Gastrocnemius medialis (tissue), 4 donors: ENCODE measurements at regions of chr6 and their contacts with region 1.

Region 1: GRCh38 chr6:155174576-155175211 is 89.1 kb upstream of the CLDN20 start:
- DNase-seq: peak; percentile 29 to 57
- ATAC-seq: peak; percentile 81 to 94
- H3K4me3 ChIP-seq: no peak overlapping the region
- H3K27ac ChIP-seq: peak overlapping the region; percentile 44 to 70 (median 55)
- H3K4me1 ChIP-seq: peaks cover 0 to 11% of the 10 kb centered on the region in 2 donors
- H3K27me3 ChIP-seq: no peaks in the 10 kb centered on the region
- CTCF ChIP-seq: peak; percentile 48 to 69 (median 58)
- POLR2A ChIP-seq: no peak

Region 2: GRCh38 chr6:154675602-154676088 is 499.0 kb before region 1 on chr6:
- in situ Hi-C with region 1: loop called (anchors 5 to 10 kb)
- intact Hi-C with region 1: loop called (anchors 5 kb)
- DNase-seq: peak; percentile 67 to 88
- ATAC-seq: peak; percentile 100
- H3K4me3 ChIP-seq: no peak overlapping the region
- H3K27ac ChIP-seq: no peak overlapping the region
- H3K4me1 ChIP-seq: no peaks in the 10 kb centered on the region
- H3K27me3 ChIP-seq: no peaks in the 10 kb centered on the region
- CTCF ChIP-seq: peak; percentile 91 to 99 (median 95)
- POLR2A ChIP-seq: no peak

Region 3: DNA sequence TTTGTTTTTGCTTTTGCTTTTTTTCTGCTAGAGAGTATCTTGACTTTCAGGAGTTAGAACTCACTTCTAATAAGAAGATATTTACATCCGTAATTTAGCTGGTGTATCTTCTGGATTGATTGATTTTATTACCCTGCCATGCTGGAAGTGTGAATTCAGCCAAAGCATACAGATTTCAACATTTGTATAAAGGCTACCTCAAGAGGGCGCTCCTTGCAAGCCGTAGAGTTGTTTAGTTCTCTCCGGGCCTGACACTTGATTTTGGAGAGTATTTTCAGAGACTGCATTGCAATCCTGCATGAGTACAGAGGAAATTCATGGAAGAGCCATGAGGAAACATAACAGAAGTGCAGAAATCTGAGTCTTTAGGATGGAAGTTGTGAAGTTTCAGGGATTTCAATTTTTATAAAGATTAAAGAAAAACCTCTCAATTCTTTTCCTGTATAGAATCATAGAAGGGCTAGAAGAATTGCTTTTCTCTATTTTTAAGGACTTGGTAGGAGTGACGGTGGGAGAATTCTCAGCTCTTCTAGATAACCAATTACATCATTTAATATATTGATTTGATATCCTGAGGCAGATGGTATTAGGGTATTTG is 246.3 kb before region 1 on chr6:
- in situ Hi-C with region 1: loop called (anchors 10 kb)
- intact Hi-C with region 1: loop called (anchors 1 kb)
- DNase-seq: no peak
- ATAC-seq: peak in 1 of 2 donors; percentile 68
- H3K4me3 ChIP-seq: no peak overlapping the region
- H3K27ac ChIP-seq: no peak overlapping the region
- H3K4me1 ChIP-seq: peaks cover 0 to 8% of the 10 kb centered on the region in 2 donors
- H3K27me3 ChIP-seq: no peaks in the 10 kb centered on the region
- CTCF ChIP-seq: peak; percentile 41 to 77 (median 55)
- POLR2A ChIP-seq: no peak

Region 4: DNA sequence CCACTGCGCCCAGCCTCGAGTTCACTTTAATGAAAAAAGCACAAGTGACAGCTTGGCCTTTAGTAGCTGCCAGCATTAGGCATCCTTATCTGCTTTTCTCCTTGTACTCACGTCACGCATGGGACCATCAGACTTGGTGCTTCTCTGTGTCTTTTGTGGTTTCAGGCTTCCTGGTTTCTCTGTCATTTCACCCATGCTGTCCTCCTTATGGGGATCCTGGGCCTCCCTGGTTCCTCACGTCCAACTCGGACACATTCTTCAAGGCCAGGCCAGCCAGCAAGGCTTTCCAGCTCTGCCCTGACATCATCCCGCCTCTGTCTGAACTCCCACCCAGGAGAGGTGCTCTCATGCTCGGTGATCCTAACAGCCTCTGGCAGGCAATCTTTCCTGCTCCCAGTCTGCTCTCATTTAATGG is 96.4 kb before region 1 on chr6:
- in situ Hi-C with region 1: no loop called
- intact Hi-C with region 1: no loop called
- DNase-seq: no peak
- ATAC-seq: no peak
- H3K4me3 ChIP-seq: no peak overlapping the region
- H3K27ac ChIP-seq: no peak overlapping the region
- H3K4me1 ChIP-seq: no peaks in the 10 kb centered on the region
- H3K27me3 ChIP-seq: no peaks in the 10 kb centered on the region
- CTCF ChIP-seq: no peak
- POLR2A ChIP-seq: no peak

Region 5: DNA sequence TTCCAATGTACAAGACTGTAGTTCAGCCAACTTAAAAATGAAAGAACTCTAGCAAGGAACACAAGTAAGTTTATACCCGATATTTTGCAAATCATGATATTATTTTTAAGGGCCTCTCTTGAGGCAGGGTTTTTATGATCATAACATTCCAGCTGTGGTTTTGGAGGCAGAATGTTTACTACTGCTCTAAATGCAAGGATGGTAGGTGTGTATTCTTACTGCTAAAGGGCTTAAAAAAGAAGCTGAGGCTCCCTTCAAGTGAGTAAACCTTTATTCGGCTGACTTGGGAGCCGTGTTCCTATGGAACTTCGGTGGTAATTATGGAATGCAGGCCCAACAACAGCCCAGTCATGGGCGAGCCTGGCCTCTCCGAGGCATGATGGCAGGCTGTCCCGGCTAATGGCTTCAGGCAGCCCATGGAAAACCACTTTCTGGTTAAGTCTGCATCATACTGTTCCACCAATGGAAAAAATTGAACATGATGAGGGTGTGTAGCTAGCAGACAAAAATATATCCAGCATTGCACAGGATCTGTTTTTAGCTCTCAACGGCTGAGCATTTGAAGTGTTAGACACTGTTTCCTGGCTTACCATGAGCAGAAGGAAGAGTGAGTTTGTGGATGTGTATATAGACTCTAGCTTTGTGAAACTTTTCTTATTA is 68.1 kb before region 1 on chr6:
- in situ Hi-C with region 1: no loop called
- intact Hi-C with region 1: loop called (anchors 5 kb)
- DNase-seq: no peak
- ATAC-seq: peak; percentile 60 to 76
- H3K4me3 ChIP-seq: peak overlapping the region in 3 of 4 donors; percentile 38 to 44 (median 44)
- H3K27ac ChIP-seq: peak overlapping the region; percentile 11 to 72 (median 63)
- H3K4me1 ChIP-seq: peaks cover 4 to 8% of the 10 kb centered on the region in 2 donors
- H3K27me3 ChIP-seq: no peaks in the 10 kb centered on the region
- CTCF ChIP-seq: no peak
- POLR2A ChIP-seq: no peak

Region 6: DNA sequence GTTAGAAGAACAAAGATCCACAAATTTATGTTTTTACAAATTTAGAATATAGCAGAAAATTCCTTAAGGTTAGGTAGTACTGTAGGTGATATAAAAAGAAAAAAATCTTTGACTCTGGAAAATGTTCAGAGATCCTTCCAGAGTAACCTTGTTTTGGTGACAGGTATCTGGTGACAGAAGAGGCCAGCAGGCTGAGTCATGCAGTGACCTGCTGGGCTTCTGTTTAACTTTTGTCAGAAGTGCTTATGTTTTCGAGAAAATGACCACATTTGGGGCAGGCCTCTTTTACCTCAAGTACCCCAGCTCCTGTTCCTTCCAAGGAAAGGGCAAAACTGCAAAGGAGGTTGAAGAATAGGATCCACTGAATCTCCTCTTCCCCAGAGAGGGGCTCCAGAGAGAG is 78.6 kb after region 1 on chr6:
- in situ Hi-C with region 1: loop called in 2 of 4 experiments (anchors 10 kb)
- intact Hi-C with region 1: loop called (anchors 1 kb)
- DNase-seq: peak; percentile 21 to 45
- ATAC-seq: peak; percentile 88 to 89
- H3K4me3 ChIP-seq: no peak overlapping the region
- H3K27ac ChIP-seq: peak overlapping the region; percentile 79 to 85 (median 81)
- H3K4me1 ChIP-seq: peaks cover 18 to 19% of the 10 kb centered on the region in 2 donors
- H3K27me3 ChIP-seq: no peaks in the 10 kb centered on the region
- CTCF ChIP-seq: no peak
- POLR2A ChIP-seq: no peak

Region 7: GRCh38 chr6:155530219-155530834 is 355.6 kb after region 1 on chr6:
- in situ Hi-C with region 1: no loop called
- intact Hi-C with region 1: loop called (anchors 5 kb)
- DNase-seq: peak in 1 of 2 donors; percentile 12
- ATAC-seq: peak; percentile 43 to 49
- H3K4me3 ChIP-seq: peak overlapping the region in 2 of 4 donors; percentile 37 to 38
- H3K27ac ChIP-seq: peak overlapping the region; percentile 70 to 89 (median 81)
- H3K4me1 ChIP-seq: peaks cover 19 to 25% of the 10 kb centered on the region in 2 donors
- H3K27me3 ChIP-seq: no peaks in the 10 kb centered on the region
- CTCF ChIP-seq: peak; percentile 40 to 75 (median 73)
- POLR2A ChIP-seq: no peak